Endothelial cell of umbilical vein (primary cell): ENCODE measurements at regions of chr17 and their contacts with region 1.

Region 1: GRCh38 chr17:64682261-64683181 is 20.4 kb upstream of the SMURF2 start:
- DNase-seq: peak; percentile 62
- H3K4me3 ChIP-seq: no peak overlapping the region
- H3K27ac ChIP-seq: peak overlapping the region; percentile 25
- H3K4me1 ChIP-seq: peaks cover 19% of the 10 kb centered on the region
- H3K27me3 ChIP-seq: no peaks in the 10 kb centered on the region
- CTCF ChIP-seq: no peak
- POLR2A ChIP-seq: no peak

Region 2: DNA sequence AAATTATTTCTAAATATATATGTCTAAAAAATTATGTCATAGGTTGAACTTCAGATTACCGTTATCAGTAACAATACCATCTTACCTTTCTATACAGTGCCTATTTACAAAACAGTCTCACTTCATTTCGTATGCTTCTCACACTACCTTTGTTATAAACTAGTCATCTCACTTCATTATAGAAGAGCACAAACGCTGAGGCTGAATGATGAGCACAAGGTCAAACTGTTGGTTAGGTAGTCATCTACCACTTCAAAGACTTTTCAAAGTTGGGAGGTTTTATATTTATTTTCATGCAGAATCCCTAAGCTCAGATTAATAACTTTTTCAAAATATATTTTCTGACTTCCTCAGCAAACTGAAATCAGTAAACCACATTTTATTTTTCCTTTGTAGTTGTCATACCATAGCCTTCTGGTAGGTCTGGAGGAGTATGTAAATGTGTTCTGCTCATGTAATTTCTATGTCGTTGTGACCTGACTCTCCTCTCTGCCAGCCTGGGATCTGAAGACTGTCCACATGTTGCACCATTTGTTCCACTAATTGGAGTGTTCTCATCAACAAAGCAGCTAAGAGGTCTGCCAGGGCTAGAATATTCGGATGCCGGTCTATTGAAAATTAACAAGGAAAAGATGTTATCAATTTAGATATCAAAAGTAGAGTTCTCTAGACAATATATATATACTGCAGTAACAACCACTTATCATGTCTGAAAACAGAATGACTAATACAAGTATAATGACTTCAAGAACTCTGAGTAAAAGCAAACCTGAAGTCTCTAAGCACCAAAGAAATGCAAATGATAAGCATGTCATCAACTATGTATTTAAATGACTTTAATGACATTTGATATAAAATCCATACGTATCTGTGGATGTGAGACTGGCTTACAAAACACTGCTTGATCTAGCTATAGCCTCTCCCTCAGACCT is 101.9 kb before region 1 on chr17:
- CTCF ChIA-PET with region 1: no interaction called
- POLR2A ChIA-PET with region 1: no interaction called
- dilution Hi-C with region 1: no loop called
- intact Hi-C with region 1: no loop called
- DNase-seq: no peak
- H3K4me3 ChIP-seq: no peak overlapping the region
- H3K27ac ChIP-seq: no peak overlapping the region
- H3K4me1 ChIP-seq: peaks cover 3% of the 10 kb centered on the region
- H3K27me3 ChIP-seq: no peaks in the 10 kb centered on the region
- CTCF ChIP-seq: no peak
- POLR2A ChIP-seq: no peak

Region 3: DNA sequence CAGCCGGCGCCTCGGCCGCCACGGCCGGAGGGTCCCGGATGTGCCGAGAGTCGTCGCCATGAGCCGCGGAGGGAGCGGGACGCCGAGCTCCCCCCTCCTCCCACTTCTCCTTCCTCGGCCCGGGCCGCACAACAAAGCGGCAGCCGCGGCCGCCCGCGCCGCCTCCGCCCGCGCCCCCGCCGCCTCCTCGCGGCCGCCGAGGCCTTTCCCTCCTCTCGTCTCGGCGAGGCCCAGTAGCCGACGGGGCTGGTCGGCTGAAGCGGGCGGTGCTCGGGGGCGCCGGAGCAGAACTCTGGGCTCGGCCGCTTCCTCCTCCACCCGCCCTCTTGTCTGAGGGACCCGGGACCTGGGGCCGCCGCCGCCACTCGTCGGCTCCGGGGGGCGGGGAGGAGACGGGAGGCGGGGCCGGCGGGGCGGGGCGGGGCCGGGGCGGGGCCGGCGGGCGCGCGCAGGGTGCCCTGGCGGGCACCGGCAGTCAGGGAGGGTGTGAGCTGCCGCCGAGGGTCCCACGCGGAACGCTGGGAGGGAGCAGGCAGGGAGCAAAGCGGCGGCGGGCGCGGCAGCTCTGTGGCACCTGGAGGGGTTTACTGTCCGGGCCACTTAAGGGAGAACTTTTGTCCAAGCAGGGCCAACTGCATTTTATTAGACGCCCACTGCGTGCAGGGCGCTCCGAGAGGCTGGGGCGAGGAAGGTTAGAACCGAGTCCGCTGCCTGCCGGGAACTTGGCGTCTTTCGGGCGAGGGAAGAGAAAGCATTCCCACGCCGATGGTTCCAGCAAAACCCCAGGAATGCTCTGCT is 20.3 kb before region 1 on chr17 and contains the start of gene SMURF2:
- CTCF ChIA-PET with region 1: no interaction called
- POLR2A ChIA-PET with region 1: no interaction called
- dilution Hi-C with region 1: no loop called
- intact Hi-C with region 1: loop called (anchors 2 kb)
- DNase-seq: peak; percentile 68
- H3K4me3 ChIP-seq: peak within 1 kb of the TSS; percentile 92 to 97 (median 95)
- H3K27ac ChIP-seq: peak within 1 kb of the TSS; percentile 86
- H3K4me1 ChIP-seq: peaks cover 29% of the 10 kb centered on the region
- H3K27me3 ChIP-seq: no peaks in the 10 kb centered on the region
- CTCF ChIP-seq: no peak
- POLR2A ChIP-seq: peak; percentile 97
- total RNA-seq, gene SMURF2: 105 and 108 TPM in 2 replicates

Region 4: DNA sequence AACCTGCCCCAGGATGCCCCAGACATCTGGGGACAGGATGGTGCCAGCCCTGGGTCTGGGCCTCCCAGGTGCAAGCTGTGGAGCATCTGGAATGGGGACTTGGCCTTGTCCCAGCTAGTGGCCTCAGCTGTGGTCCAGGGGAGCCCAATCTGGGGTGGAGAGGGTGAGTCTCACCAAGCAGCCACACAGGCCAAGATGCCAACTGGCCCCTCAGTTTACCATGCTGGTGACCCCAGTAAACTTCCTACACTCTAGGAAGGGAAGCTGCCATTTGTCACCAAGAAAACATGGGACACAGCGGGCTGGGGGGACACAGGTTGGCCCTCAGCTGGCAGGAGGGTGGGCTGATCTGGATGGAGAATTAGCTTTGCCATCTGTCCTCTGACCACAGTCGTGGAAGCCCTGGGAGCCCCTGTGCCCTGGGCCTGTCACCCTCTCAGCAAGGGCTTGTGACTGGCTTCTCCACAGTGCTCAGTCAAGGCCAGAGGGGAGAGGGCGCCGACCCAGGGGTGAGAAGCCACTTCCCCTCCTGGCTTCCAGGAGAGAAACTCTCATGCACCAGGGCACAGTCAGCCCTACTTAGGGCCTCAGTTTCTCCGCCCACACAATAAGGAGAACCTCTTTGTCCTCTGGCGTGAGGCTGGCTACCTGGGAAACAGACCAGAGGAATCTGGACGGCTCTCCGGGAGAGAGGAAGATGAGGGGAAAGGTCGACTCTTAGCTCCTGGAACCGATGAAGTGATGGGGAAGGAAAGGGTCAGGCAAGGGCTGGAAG is 106.0 kb after region 1 on chr17:
- CTCF ChIA-PET with region 1: no interaction called
- POLR2A ChIA-PET with region 1: no interaction called
- dilution Hi-C with region 1: no loop called
- intact Hi-C with region 1: no loop called
- DNase-seq: no peak
- H3K4me3 ChIP-seq: no peak overlapping the region
- H3K27ac ChIP-seq: no peak overlapping the region
- H3K4me1 ChIP-seq: peaks cover 6% of the 10 kb centered on the region
- H3K27me3 ChIP-seq: no peaks in the 10 kb centered on the region
- CTCF ChIP-seq: no peak
- POLR2A ChIP-seq: no peak